Gastrocnemius medialis (tissue), 4 donors: ENCODE measurements at regions of chr5 and their contacts with region 1.

Region 1: DNA sequence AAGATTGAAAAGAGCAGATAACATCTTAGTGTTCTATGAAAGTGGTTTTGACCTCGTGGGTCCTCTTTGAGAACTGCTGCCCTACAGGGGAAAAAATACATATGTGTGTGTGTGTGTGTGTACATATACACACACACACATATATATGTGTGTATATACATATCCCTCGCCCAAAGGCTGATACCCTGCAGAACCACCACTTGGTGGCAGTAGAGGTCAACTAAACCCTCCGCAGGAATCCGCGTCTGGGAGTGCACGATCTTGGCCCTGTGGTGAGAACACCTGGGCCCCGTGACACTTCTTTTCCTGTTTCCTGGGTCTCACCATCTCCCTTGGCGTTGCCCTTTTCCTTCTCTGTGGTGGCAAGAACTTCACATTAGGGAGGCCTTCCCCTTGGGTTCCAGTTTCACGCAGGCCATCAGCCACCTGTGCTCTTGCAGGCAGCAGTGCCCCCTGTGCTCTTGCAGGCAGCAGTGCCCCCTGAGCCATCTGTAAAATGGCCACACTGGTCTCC is 8.2 kb downstream of the IL9 start:
- DNase-seq: peak; percentile 27 to 31
- ATAC-seq: peak; percentile 87 to 94
- H3K4me3 ChIP-seq: no peak overlapping the region
- H3K27ac ChIP-seq: no peak overlapping the region
- H3K4me1 ChIP-seq: no peaks in the 10 kb centered on the region
- H3K27me3 ChIP-seq: no peaks in the 10 kb centered on the region
- CTCF ChIP-seq: peak; percentile 69 to 83 (median 77)
- POLR2A ChIP-seq: no peak

Region 2: GRCh38 chr5:136062366-136063274 is 175.2 kb after region 1 on chr5:
- in situ Hi-C with region 1: no loop called
- intact Hi-C with region 1: loop called (anchors 5 kb)
- DNase-seq: no peak
- ATAC-seq: no peak
- H3K4me3 ChIP-seq: no peak overlapping the region
- H3K27ac ChIP-seq: no peak overlapping the region
- H3K4me1 ChIP-seq: peaks cover 4 to 18% of the 10 kb centered on the region in 2 donors
- H3K27me3 ChIP-seq: no peaks in the 10 kb centered on the region
- CTCF ChIP-seq: peak; percentile 18 to 57 (median 49)
- POLR2A ChIP-seq: no peak

Region 3: DNA sequence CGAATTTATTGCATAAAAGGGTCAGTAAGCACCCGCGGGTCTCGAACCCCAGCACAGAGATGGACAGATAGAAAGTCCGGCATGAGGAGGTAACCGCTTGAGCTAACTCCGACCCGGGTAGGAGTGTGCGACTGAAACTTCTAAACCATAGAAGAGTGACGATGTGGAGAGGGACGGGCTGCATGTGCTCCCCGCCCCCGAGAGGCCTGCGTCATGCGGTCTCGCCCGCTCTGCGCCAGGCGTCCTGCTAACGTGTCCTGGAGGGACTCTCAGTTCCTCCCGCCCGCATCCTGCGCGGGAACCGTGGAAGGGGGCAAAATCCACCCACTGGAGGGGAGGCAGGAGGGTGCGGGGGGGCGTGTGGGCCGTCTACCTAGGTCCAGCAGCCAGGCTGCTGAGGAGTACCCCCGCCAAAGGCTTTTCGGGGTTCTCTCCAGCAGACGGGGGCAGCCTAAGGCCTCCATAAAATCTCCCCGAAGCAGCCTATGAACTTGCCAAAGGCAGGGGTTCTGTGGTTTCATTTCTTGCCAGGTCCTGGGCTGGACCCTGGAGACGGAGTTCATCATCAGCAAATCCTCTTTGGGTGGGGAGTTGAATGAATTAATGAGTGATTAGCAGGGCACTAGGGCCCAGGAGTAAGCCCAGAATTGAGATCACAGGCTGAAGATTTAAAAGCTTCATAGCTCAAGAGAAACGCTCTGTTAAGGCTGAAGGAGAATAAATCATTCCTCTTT is 193.2 kb after region 1 on chr5:
- in situ Hi-C with region 1: loop called in 2 of 4 experiments (anchors 10 kb)
- intact Hi-C with region 1: loop called (anchors 5 kb)
- DNase-seq: peak; percentile 56 to 61
- ATAC-seq: peak; percentile 59 to 69
- H3K4me3 ChIP-seq: peak overlapping the region; percentile 9 to 46 (median 35)
- H3K27ac ChIP-seq: peak overlapping the region; percentile 52 to 65 (median 60)
- H3K4me1 ChIP-seq: peaks cover 0 to 5% of the 10 kb centered on the region in 2 donors
- H3K27me3 ChIP-seq: no peaks in the 10 kb centered on the region
- CTCF ChIP-seq: no peak
- POLR2A ChIP-seq: peak; percentile 28 to 56

Region 4: DNA sequence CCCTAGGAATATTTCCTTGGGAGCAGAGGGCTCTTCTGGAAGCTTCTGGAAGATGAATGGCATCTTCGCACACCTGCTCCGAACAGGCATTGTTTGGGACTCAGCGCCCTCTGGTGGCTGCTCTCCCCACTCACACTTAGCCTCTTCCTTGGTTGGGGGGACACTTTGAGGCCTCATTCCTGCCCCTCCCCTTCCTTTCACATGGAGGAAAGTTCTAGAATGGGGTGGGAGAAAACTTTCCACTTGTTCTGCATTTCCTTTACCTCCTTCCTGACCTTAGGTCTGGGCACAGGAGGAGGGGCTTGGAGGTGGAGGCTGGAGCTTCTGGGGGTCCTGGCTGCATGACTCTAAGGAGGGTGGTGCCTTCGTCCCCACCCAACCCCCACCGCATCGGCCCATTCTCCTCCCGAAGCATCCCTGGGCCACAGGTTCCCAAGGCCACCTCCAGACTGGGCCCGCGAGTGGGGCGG is 324.9 kb after region 1 on chr5:
- in situ Hi-C with region 1: loop called (anchors 5 to 10 kb)
- intact Hi-C with region 1: loop called (anchors 1 kb)
- DNase-seq: peak in 1 of 2 donors; percentile 20
- ATAC-seq: peak; percentile 42 to 56
- H3K4me3 ChIP-seq: no peak overlapping the region
- H3K27ac ChIP-seq: no peak overlapping the region
- H3K4me1 ChIP-seq: no peaks in the 10 kb centered on the region
- H3K27me3 ChIP-seq: peaks cover 0 to 2% (median 0%) of the 10 kb centered on the region in 3 donors
- CTCF ChIP-seq: peak; percentile 57 to 89 (median 80)
- POLR2A ChIP-seq: no peak